Panc1 (cell line): ENCODE measurements at regions of chr9 and their contacts with region 1.

Region 1: GRCh38 chr9:34546834-34547827 is 24.3 kb upstream of the ENHO start:
- DNase-seq: no peak
- ATAC-seq: peak; percentile 75
- H3K4me3 ChIP-seq: no peak overlapping the region
- H3K27ac ChIP-seq: no peak overlapping the region
- H3K4me1 ChIP-seq: no peaks in the 10 kb centered on the region
- H3K27me3 ChIP-seq: 0 out of 2 replicates have a peak, but pooled peaks cover 2% of the 10 kb centered on the region
- CTCF ChIP-seq: no peak

Region 2: GRCh38 chr9:34591248-34591916 is 44.3 kb after region 1 on chr9:
- CTCF ChIA-PET with region 1: interaction called, 24 read pairs
- POLR2A ChIA-PET with region 1: interaction called, 5 read pairs
- in situ Hi-C with region 1: no loop called
- intact Hi-C with region 1: loop called (anchors 1 kb)
- DNase-seq: peak; percentile 33
- ATAC-seq: peak; percentile 91
- H3K4me3 ChIP-seq: peak overlapping the region in 1 of 2 experiments; percentile 17; a peak in 1 of 4 replicates
- H3K27ac ChIP-seq: no peak overlapping the region
- H3K4me1 ChIP-seq: peaks cover 10% of the 10 kb centered on the region
- H3K27me3 ChIP-seq: peaks cover 6% of the 10 kb centered on the region
- CTCF ChIP-seq: no peak

Region 3: DNA sequence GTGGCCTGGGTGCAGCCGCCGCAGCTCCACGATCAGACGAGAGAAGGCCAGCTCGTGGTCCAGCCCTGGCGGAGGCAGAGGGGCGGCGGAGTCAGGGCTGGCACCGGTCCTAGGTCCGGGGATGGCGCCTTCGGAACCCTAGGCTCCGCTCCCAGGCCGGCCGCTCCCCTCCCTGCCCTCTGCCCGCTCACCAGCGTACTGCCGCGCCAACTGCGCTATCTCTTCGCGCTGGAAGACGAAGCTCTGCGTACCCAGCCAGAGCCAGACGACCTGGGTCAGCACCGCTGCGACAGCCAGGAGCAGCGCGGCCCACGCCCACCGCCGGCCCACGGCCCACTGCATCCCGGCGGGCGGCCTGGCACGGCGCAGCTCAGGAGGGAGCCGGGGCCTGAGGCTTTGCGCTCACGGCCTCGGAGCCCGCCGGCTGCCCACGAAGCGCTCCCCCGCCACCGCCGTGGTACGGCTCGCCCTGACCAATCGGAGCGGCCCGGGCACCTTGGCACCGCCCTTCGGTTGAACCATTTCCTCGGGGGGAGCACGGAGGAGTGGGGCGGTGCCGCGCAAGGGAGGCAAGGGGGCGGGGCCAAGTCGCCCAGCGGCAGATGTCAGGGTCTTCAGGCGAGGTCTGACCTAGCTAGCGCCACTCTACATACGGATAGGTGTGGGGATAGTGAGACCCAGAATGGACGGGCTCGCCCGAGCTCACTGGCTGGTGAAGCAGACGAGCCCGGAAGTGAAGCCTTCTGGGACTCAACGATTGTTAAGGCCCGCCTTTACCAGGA is 90.4 kb after region 1 on chr9 and contains the start of gene SIGMAR1:
- CTCF ChIA-PET with region 1: no interaction called
- POLR2A ChIA-PET with region 1: no interaction called
- in situ Hi-C with region 1: no loop called
- intact Hi-C with region 1: no loop called
- DNase-seq: peak; percentile 51
- ATAC-seq: peak; percentile 94
- H3K4me3 ChIP-seq: peak within 1 kb of the TSS; percentile 70 to 94
- H3K27ac ChIP-seq: peak within 1 kb of the TSS; percentile 98
- H3K4me1 ChIP-seq: peaks cover 13% of the 10 kb centered on the region
- H3K27me3 ChIP-seq: no peaks in the 10 kb centered on the region
- CTCF ChIP-seq: no peak
- total RNA-seq, gene SIGMAR1: 131 TPM